ENCODE measurements at regions of chr12 and their contacts with region 1.

Region 1: DNA sequence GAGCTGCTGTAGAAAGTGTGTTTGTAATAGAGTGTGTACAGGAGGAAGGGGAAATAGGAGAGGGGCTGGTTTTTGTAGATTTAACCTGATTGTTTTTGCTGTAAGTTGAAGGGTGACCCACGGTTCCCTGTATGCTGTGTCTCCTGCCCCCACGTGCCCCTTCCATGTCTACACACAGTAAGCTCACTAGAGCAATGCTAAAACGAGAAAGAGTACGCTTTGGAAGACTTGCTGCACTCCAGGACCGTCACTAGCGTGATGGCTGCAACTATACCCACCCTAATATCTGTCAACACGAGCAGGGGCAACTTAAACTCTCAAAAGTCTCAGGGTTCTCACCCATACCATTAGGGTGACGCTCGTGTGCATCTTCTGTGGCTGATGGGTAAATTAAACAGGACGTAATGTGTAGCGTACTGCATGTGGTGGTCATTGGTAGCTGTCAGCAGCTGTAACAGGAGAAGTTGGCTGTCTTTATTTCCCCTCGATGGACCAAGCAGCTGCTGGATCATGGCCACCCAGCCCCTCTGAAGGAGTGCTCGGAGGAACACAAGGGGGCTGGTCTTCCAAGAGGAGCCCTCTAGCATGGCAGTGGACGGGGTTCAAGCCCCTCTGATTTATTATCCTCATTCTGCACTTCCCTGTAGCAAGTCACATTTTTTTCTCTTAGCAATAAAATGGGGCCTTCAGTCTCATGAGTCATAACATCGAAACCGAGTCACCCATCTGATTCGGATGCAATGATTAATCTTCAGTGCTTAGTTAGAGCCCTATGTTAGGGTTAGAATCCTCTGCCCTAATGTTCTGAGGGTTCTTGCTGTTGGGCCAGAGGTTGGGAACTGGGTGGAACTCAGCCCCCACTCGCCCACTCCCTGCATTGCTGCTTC is 14.0 kb downstream of the CCND2 start:
- DNase-seq: no peak
- ATAC-seq: no peak
- H3K4me3 ChIP-seq: no peak overlapping the region
- H3K27ac ChIP-seq: no peak overlapping the region
- H3K4me1 ChIP-seq: peaks cover 11% of the 10 kb centered on the region
- H3K27me3 ChIP-seq: no peaks in the 10 kb centered on the region

Region 2: GRCh38 chr12:3896801-3897331 is 390.7 kb before region 1 on chr12:
- intact Hi-C with region 1: loop called in 1 of 4 experiments (anchors 10 kb)
- DNase-seq: no peak
- ATAC-seq: peak; percentile 45 to 77
- H3K4me3 ChIP-seq: no peak overlapping the region
- H3K27ac ChIP-seq: no peak overlapping the region
- H3K4me1 ChIP-seq: no peaks in the 10 kb centered on the region
- H3K27me3 ChIP-seq: no peaks in the 10 kb centered on the region

Region 3: DNA sequence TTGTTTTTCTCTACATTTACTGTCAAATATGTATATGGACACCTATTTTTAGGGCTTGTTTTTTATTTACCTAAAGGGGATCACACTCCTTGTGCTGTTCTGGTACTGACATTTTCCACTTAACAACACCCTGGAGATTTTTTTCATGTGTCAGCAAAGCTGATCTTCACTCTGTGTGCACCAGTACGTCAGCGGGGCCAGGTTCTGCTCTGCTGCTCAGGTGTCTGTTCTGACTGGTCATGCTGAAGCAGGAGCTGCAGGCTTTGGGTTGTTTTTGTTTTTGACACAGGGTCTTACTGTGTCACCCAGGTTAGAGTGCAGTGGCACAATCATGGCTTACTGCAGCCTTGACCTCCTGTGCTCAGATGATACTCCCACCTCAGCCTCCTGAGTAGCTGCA is 95.9 kb before region 1 on chr12:
- intact Hi-C with region 1: no loop called
- DNase-seq: no peak
- ATAC-seq: no peak
- H3K4me3 ChIP-seq: no peak overlapping the region
- H3K27ac ChIP-seq: no peak overlapping the region
- H3K4me1 ChIP-seq: no peaks in the 10 kb centered on the region
- H3K27me3 ChIP-seq: no peaks in the 10 kb centered on the region

Measured in right cardiac atrium (tissue), 5 donors.